ENCODE measurements at regions of chr22 and their contacts with region 1.

Region 1: GRCh38 chr22:30920407-30920806 is 48.2 kb downstream of the MORC2 start:
- DNase-seq: peak; percentile 26
- H3K4me3 ChIP-seq: no peak overlapping the region
- H3K27ac ChIP-seq: no peak overlapping the region
- H3K27me3 ChIP-seq: no peaks in the 10 kb centered on the region
- CTCF ChIP-seq: peak; percentile 94

Region 2: DNA sequence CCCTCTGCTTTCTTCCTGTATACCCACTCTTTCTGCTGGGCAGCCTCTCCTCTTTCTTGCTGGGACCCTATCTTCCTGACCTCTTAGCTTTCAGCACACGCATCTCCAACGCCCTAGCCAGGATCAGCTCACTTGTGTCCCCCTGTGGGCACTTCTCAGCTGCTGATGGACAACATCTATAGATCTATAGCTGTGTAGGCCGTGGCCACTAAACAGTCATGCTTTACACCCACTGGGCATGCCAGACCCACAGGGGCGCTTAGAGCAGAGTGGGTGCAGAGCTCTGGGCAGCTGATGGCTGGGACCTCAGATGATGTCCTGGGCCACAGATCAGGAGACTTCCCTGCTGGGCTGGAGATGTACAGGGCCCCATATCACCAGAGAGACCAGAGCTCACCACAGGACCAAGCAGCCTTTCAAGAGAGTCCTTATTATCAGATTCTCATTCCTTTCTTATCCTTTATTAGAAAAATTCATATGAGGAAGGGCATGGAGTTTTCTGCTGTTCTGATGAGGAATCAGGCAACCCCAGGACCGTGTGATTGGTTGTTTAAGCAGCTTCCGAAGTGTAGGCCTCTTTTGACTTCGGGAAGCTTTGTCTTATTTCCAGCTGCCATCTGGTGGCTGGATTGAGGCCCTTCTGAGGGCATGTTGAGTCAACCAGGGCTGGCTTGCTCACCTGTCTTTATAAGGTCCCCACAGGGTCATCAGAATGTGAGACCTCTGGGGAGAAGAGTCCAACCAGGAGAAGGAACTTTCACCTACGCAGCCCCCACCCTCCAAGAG is 165.2 kb before region 1 on chr22:
- CTCF ChIA-PET with region 1: interaction called, 24 read pairs
- POLR2A ChIA-PET with region 1: no interaction called
- DNase-seq: peak; percentile 61
- H3K4me3 ChIP-seq: no peak overlapping the region
- H3K27ac ChIP-seq: no peak overlapping the region
- H3K27me3 ChIP-seq: no peaks in the 10 kb centered on the region
- CTCF ChIP-seq: peak; percentile 91

Region 3: GRCh38 chr22:30770716-30771115 is 149.7 kb before region 1 on chr22:
- CTCF ChIA-PET with region 1: interaction called, 271 read pairs
- POLR2A ChIA-PET with region 1: no interaction called
- DNase-seq: no peak
- H3K4me3 ChIP-seq: no peak overlapping the region
- H3K27ac ChIP-seq: no peak overlapping the region
- H3K27me3 ChIP-seq: peaks cover 7% of the 10 kb centered on the region
- CTCF ChIP-seq: no peak

Region 4: DNA sequence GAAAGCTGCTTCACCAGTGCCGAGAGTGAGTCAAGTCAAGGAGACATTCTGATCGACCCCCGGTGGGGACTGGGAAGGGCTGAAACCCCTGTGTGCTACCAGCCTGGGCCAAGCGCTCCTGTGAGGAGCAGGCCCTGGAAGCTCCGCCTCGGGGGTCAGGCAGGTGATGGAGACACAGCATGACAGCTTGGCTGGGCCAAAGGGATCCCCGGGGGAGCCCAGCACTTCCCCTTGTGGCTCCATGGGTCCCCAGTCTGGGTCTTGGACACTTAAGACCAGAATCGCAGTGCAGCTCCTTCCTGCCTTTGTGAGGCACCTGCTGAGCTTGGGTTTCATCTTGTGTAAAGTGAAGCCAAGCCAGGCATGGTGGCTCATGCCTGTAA is 41.0 kb before region 1 on chr22:
- CTCF ChIA-PET with region 1: no interaction called
- POLR2A ChIA-PET with region 1: no interaction called
- DNase-seq: no peak
- H3K4me3 ChIP-seq: no peak overlapping the region
- H3K27ac ChIP-seq: no peak overlapping the region
- H3K27me3 ChIP-seq: peaks cover 10% of the 10 kb centered on the region
- CTCF ChIP-seq: no peak

Region 5: GRCh38 chr22:30908051-30908461 is 12.4 kb before region 1 on chr22:
- CTCF ChIA-PET with region 1: interaction called, 70 read pairs
- POLR2A ChIA-PET with region 1: no interaction called
- DNase-seq: no peak
- H3K4me3 ChIP-seq: no peak overlapping the region
- H3K27ac ChIP-seq: no peak overlapping the region
- H3K27me3 ChIP-seq: no peaks in the 10 kb centered on the region
- CTCF ChIP-seq: no peak

Region 6: GRCh38 chr22:30979932-30980331 is 59.5 kb after region 1 on chr22:
- CTCF ChIA-PET with region 1: no interaction called
- POLR2A ChIA-PET with region 1: no interaction called
- DNase-seq: no peak
- H3K4me3 ChIP-seq: no peak overlapping the region
- H3K27ac ChIP-seq: no peak overlapping the region
- H3K27me3 ChIP-seq: no peaks in the 10 kb centered on the region
- CTCF ChIP-seq: no peak

Measured in AG04450 (cell line).